ENCODE measurements at regions of chr1 and their contacts with region 1.

Region 1: DNA sequence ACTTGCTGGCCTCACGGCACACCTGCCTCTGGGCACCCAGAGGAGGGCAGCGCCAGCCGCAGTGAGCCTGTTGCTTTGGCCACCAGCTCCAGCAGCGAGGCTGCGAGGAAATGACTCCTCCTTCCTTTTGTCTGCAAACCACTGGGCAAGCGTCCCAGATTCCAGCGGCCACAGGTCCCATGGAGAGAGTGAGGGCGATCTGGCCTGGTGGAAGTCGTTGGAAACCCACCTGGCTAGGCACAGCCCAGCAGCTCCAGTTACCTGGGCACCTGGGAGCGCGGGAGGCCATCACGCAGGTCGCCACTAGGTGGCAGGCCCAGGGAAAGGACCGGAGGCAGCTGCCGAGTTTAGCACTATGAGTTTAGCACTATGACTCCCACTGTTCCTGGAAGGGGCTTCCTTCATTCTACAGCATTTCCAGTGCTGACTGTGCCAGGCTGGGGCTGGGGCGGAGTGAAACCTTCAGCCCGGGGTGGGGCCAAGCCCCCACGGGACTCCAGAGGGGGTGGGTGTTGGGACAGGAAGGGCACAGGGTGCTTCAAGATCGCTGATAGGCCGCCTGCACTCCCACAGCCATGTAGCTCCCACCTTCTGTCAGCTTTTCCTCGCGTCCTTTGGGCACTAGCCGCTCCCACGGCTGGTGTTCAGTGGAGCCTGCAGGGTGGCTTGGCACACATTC is 1.1 kb upstream of the ESPN start:
- DNase-seq: peak; percentile 80
- ATAC-seq: peak; percentile 50
- H3K4me3 ChIP-seq: peak overlapping the region; percentile 62 to 76
- H3K27ac ChIP-seq: peak overlapping the region; percentile 37
- H3K4me1 ChIP-seq: peaks cover 65 to 89% of the 10 kb centered on the region in 2 experiments
- H3K27me3 ChIP-seq: no peaks in the 10 kb centered on the region
- CTCF ChIP-seq: peak in 2 of 3 experiments; percentile 90 to 95; a peak in 4 of 6 replicates
- POLR2A ChIP-seq: no peak
- RAD21 ChIP-seq: no peak

Region 2: GRCh38 chr1:6099787-6100765 is 323.4 kb before region 1 on chr1:
- CTCF ChIA-PET with region 1: no interaction called
- POLR2A ChIA-PET with region 1: no interaction called
- RAD21 ChIA-PET with region 1: no interaction called
- intact Hi-C with region 1: no loop called
- DNase-seq: no peak
- ATAC-seq: peak; percentile 81
- H3K4me3 ChIP-seq: no peak overlapping the region
- H3K27ac ChIP-seq: no peak overlapping the region
- H3K4me1 ChIP-seq: no peaks in the 10 kb centered on the region; a peak in 2 of 4 replicates
- H3K27me3 ChIP-seq: no peaks in the 10 kb centered on the region
- CTCF ChIP-seq: peak in 2 of 3 experiments; percentile 25 to 30; a peak in 3 of 6 replicates
- POLR2A ChIP-seq: no peak
- RAD21 ChIP-seq: no peak; the same call in 1 of the 2 replicates

Region 3: DNA sequence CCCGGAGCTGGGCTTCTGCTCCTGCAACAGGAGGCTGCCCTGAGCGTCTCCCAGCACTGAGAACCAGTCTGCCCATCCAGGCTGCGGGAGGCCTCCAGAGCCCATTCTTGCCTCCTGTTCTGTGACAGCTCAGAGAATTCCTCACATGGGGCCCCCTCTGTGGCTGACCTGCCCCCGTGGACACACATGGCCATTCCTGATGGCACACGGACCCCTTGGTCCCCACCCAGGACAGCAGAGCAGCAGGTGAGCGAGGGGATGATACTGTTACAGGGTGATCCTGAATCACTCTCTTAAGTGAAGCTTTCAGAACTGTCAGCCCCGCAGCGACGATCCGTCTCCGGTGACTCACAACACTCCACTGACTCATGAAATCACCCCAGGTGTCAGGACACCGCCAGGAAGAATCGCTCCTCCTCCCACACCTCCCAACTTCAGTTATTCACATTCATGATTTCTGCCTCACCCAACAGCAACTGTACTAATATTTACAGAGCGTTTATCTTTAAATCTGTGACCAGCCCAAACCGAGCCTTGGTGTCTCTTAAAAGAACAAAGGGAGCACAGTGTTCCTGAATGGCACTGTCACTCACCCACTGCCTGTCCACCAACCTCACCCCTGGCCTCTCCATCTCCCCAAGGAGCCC is 265.8 kb before region 1 on chr1:
- CTCF ChIA-PET with region 1: no interaction called
- POLR2A ChIA-PET with region 1: no interaction called
- RAD21 ChIA-PET with region 1: no interaction called
- intact Hi-C with region 1: no loop called
- DNase-seq: peak; percentile 75
- ATAC-seq: peak; percentile 93
- H3K4me3 ChIP-seq: peak overlapping the region in 1 of 2 experiments; percentile 12; a peak in 2 of 4 replicates
- H3K27ac ChIP-seq: peak overlapping the region; percentile 50
- H3K4me1 ChIP-seq: peaks cover 21 to 26% of the 10 kb centered on the region in 2 experiments
- H3K27me3 ChIP-seq: no peaks in the 10 kb centered on the region
- CTCF ChIP-seq: no peak
- POLR2A ChIP-seq: no peak
- RAD21 ChIP-seq: no peak

Region 4: GRCh38 chr1:6438047-6438525 is 14.6 kb after region 1 on chr1:
- CTCF ChIA-PET with region 1: interaction called, 105 read pairs
- POLR2A ChIA-PET with region 1: interaction called, 13 read pairs
- RAD21 ChIA-PET with region 1: interaction called, 9 to 11 read pairs
- intact Hi-C with region 1: loop called (anchors 1 kb)
- DNase-seq: no peak
- ATAC-seq: peak; percentile 52
- H3K4me3 ChIP-seq: no peak overlapping the region
- H3K27ac ChIP-seq: no peak overlapping the region
- H3K4me1 ChIP-seq: peaks cover 8 to 27% of the 10 kb centered on the region in 2 experiments
- H3K27me3 ChIP-seq: no peaks in the 10 kb centered on the region
- CTCF ChIP-seq: peak in 2 of 3 experiments; percentile 93; a peak in 4 of 6 replicates
- POLR2A ChIP-seq: no peak
- RAD21 ChIP-seq: no peak

Measured in HCT116 (cell line).